ENCODE measurements at regions of chr20 and their contacts with region 1.

Region 1: DNA sequence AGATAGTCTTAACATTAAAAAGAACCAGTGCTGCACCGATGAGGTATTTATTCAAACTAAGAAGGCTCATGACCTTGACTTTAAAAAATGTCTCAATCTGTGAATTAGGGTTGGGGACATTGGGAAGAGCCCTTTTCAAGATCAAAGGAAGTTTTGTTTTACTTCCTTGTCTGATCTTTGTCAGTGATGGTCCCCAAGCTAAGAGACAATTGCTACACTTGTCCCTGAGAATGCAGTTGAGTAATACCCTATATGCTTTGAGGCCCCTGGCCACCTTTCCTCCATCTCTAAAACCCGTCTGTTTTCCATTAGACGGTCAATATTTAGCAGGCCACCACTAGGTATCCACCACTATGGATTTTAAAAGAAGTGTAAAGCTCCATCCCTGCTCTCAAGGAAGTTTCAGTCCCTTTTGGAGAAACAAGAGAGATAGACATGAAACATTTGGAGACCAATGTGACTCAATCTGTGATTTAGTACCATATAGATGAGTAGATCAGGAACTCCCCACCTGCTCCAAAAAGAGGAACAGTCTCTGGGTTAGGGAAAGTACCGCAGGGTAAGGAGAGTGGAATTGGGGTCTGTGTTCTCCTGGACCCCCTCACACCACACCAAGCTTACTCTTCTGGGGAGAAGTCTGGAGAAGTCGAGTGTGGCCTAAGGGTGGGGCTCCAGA is 99.1 kb upstream of the ISM1 start:
- DNase-seq: no peak
- H3K4me3 ChIP-seq: no peak overlapping the region
- CTCF ChIP-seq: no peak
- POLR2A ChIP-seq: no peak

Region 2: DNA sequence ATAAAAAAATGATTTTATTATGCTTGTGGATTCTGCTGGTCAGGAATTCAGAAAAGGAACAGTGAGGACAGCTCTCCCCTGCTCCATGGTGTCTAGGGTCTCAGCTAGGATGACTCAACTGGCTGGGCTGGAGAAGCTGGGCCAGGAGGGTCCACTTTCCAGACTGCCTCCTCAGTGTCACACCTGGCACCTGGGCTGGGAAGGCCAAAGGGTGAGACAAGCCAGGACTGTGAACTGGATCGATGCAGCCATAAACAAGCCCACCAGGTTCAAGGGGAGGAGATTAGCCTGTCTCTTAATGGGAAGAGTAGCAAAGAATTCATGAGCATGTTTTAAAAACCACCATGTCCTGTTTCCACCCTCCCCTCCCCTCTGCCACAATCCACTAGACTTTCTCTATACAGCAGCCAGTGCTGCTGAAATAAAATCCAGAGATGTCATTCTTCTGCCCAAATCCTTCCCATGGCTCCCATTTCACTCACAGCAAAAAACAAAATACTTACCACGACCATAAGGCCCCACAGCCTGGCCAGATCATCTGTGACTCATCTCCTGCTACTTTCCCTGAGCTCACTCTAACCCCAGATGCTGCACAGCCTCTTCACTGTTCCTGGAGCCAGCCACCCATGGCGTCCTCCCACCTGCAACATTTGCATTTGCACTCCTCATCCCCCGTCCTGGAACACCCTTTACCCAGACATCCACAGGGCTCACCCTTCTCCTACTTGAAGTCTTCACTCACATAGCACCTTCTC is 99.4 kb before region 1 on chr20:
- intact Hi-C with region 1: no loop called
- DNase-seq: no peak
- H3K4me3 ChIP-seq: no peak overlapping the region
- CTCF ChIP-seq: no peak
- POLR2A ChIP-seq: no peak

Region 3: GRCh38 chr20:13546497-13547131 is 424.6 kb after region 1 on chr20:
- intact Hi-C with region 1: loop called (anchors 5 kb)
- DNase-seq: peak; percentile 65 to 95
- H3K4me3 ChIP-seq: no peak overlapping the region
- CTCF ChIP-seq: peak in 1 of 3 donors; percentile 49
- POLR2A ChIP-seq: no peak

Region 4: DNA sequence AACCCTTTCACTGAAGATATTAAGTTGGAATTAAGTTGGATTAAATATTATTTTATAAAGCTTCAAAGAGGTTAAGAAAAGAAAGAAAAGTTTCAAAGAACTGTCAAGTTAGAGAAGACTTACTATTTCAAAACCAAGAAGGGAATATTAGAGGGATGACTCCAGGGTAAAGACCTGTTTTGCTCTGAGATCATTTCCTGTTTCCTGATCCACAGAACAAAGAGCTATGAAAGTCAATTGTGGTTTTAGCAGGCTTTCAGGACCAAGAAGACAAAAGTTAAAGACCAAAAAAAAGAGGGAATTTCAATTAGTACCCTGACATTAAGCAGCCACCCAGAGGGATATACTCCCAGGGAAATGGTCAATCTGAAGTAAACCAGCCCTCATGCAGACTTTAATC is 643.3 kb after region 1 on chr20:
- intact Hi-C with region 1: loop called (anchors 10 kb)
- DNase-seq: no peak
- H3K4me3 ChIP-seq: no peak overlapping the region
- CTCF ChIP-seq: no peak
- POLR2A ChIP-seq: no peak

Measured in lower leg skin (tissue), 4 donors.